AG04450 (cell line): ENCODE measurements at regions of chr1 and their contacts with region 1.

Region 1: GRCh38 chr1:200510228-200510623 is 100.4 kb upstream of the ZNF281 start:
- DNase-seq: peak; percentile 74
- H3K4me3 ChIP-seq: no peak overlapping the region
- H3K27ac ChIP-seq: no peak overlapping the region
- H3K27me3 ChIP-seq: no peaks in the 10 kb centered on the region
- CTCF ChIP-seq: peak; percentile 89

Region 2: GRCh38 chr1:199619221-199619620 is 891.0 kb before region 1 on chr1:
- CTCF ChIA-PET with region 1: interaction called, 13 read pairs
- POLR2A ChIA-PET with region 1: no interaction called
- DNase-seq: no peak
- H3K4me3 ChIP-seq: no peak overlapping the region
- H3K27ac ChIP-seq: no peak overlapping the region
- H3K27me3 ChIP-seq: peaks cover 7% of the 10 kb centered on the region
- CTCF ChIP-seq: no peak

Region 3: DNA sequence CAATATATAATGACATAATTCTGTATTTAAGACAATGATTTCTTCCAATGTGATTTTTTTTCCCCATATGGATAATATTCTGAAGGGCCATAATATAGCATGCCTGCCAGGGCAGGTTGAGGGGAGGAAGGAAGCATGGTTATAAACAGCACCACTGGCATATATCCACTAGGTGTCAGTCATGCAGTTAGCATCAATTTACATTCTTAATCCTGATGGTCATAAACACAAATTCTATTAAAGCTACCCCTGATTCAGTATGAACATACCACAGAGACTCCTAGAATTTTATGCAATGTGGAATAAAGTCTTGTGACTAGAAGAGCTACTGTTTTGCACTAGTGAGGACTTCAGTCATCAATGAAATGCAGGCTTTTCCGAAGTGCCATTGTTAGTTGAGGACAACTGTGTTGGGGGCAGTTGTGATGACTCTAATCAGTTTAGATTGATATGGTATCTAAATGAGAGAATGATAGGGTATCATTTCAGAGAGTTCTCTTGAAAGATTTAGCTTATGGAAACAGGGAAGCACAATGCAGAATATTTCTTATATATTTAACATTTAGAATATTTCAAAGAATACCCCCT is 825.4 kb before region 1 on chr1:
- CTCF ChIA-PET with region 1: interaction called, 90 read pairs
- POLR2A ChIA-PET with region 1: interaction called, 6 read pairs
- DNase-seq: peak; percentile 30
- H3K4me3 ChIP-seq: no peak overlapping the region
- H3K27ac ChIP-seq: no peak overlapping the region
- H3K27me3 ChIP-seq: no peaks in the 10 kb centered on the region
- CTCF ChIP-seq: peak; percentile 83

Region 4: DNA sequence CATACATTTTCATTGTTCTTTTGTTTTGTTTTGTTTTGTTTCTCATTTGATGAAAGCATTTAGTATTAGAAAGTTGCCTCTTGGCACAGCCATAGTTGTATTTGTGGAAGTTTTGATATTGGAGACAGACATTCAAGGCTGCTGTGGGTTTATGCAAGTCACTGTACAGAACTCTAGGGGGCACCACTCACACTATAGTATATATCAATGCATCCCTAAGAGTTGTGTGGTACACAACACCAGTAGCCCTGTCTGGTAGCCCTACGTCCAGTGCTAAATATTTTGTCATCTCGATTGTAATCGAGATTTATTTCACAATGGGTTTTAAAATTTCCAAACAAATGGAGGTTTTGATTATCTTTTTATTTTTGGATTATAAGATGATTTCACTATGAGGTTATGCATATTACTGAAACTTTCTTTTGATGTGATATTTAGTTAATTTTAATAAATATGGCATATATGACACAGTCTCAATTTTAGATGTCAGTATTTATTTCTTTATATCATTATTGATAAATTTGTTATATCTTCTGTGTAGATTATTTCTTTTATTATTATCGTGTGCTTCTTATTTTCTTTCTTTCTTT is 370.5 kb before region 1 on chr1:
- CTCF ChIA-PET with region 1: interaction called, 16 read pairs
- POLR2A ChIA-PET with region 1: no interaction called
- DNase-seq: peak; percentile 29
- H3K4me3 ChIP-seq: no peak overlapping the region
- H3K27ac ChIP-seq: no peak overlapping the region
- H3K27me3 ChIP-seq: no peaks in the 10 kb centered on the region
- CTCF ChIP-seq: peak; percentile 77

Region 5: GRCh38 chr1:200488375-200489165 is 21.7 kb before region 1 on chr1:
- CTCF ChIA-PET with region 1: interaction called, 18 read pairs
- POLR2A ChIA-PET with region 1: no interaction called
- DNase-seq: peak; percentile 66
- H3K4me3 ChIP-seq: no peak overlapping the region
- H3K27ac ChIP-seq: peak overlapping the region; percentile 61
- H3K27me3 ChIP-seq: no peaks in the 10 kb centered on the region
- CTCF ChIP-seq: peak; percentile 88